ENCODE measurements at regions of chr5 and their contacts with region 1.

Region 1: GRCh38 chr5:174317259-174317894 is 271.9 kb downstream of the NSG2 start:
- DNase-seq: peak; percentile 68
- ATAC-seq: peak; percentile 79

Region 2: GRCh38 chr5:174045470-174046025 is 271.8 kb before region 1 on chr5 and contains the start of gene NSG2:
- intact Hi-C with region 1: loop called (anchors 1 kb)
- DNase-seq: peak; percentile 91
- ATAC-seq: peak; percentile 96
- total RNA-seq, gene NSG2: 0.30 TPM

Region 3: GRCh38 chr5:174273325-174273724 is 44.1 kb before region 1 on chr5:
- intact Hi-C with region 1: no loop called
- DNase-seq: no peak
- ATAC-seq: no peak